ENCODE measurements at regions of chr14 and their contacts with region 1.

Region 1: DNA sequence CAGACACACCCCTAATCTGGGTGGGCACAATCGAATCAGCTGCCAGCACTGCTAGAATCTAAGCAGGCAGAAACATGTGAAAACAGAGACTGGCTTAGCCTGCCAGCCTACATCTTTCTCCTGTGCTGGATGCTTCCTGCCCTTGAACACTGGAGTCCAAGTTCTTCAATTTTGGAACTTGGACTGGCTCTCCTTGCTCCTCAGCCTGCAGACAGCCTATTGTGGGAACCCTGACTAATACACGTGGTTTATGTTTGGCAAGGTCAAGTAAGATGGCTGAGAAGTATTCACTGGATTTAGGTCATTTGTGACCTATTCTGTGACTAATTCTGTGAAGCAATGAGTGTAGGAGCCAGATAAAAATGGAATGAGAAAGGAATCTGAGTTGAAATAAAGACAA is 11.0 kb downstream of the GPR135 start:
- DNase-seq: no peak
- H3K4me3 ChIP-seq: no peak overlapping the region
- H3K27ac ChIP-seq: no peak overlapping the region
- H3K4me1 ChIP-seq: no peaks in the 10 kb centered on the region
- H3K27me3 ChIP-seq: no peaks in the 10 kb centered on the region
- CTCF ChIP-seq: no peak

Region 2: DNA sequence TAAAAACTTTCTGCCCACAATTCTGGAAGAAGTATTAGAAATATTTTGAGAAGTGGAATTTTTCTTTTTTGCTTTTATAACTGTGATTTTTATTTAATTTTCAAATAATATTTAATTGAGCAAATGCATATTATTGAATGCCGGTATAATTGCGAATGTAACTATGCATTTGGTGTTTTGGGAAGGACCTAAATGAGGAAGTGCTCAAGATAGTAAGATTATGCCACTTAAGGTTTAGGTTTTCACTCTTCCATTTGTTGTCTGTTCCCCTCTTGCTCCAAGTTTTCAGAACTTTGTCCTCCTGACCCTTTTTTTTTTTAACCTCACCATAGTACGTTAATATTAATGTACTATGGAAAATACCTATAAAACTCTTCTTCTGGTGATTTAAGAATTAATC is 940.9 kb before region 1 on chr14:
- CTCF ChIA-PET with region 1: no interaction called
- POLR2A ChIA-PET with region 1: no interaction called
- intact Hi-C with region 1: loop called (anchors 10 kb)
- DNase-seq: no peak
- H3K4me3 ChIP-seq: no peak overlapping the region
- H3K27ac ChIP-seq: no peak overlapping the region
- H3K4me1 ChIP-seq: no peaks in the 10 kb centered on the region
- H3K27me3 ChIP-seq: no peaks in the 10 kb centered on the region
- CTCF ChIP-seq: no peak

Region 3: GRCh38 chr14:59028476-59029202 is 425.5 kb before region 1 on chr14:
- CTCF ChIA-PET with region 1: no interaction called
- POLR2A ChIA-PET with region 1: no interaction called
- intact Hi-C with region 1: loop called (anchors 10 kb)
- DNase-seq: peak; percentile 75
- H3K4me3 ChIP-seq: no peak overlapping the region
- H3K27ac ChIP-seq: no peak overlapping the region
- H3K4me1 ChIP-seq: no peaks in the 10 kb centered on the region
- H3K27me3 ChIP-seq: no peaks in the 10 kb centered on the region
- CTCF ChIP-seq: peak; percentile 90